ENCODE measurements at regions of chr12 and their contacts with region 1.

Region 1: GRCh38 chr12:31874961-31875608 is 84.1 kb upstream of the RESF1 start:
- DNase-seq: peak; percentile 88
- ATAC-seq: peak; percentile 83
- H3K4me3 ChIP-seq: peak overlapping the region in 4 of 5 experiments; percentile 3 to 42 (median 30)
- H3K4me3 Mint-ChIP-seq: peak overlapping the region; percentile 85
- H3K27ac ChIP-seq: peak overlapping the region; percentile 98 to 100
- H3K27ac Mint-ChIP-seq: peak overlapping the region; percentile 100
- H3K4me1 ChIP-seq: peaks cover 63 to 72% of the 10 kb centered on the region in 2 donors
- H3K4me1 Mint-ChIP-seq: peaks cover 75% of the 10 kb centered on the region
- H3K27me3 ChIP-seq: no peaks in the 10 kb centered on the region
- H3K27me3 Mint-ChIP-seq: no peaks in the 10 kb centered on the region
- CTCF ChIP-seq: no peak

Region 2: DNA sequence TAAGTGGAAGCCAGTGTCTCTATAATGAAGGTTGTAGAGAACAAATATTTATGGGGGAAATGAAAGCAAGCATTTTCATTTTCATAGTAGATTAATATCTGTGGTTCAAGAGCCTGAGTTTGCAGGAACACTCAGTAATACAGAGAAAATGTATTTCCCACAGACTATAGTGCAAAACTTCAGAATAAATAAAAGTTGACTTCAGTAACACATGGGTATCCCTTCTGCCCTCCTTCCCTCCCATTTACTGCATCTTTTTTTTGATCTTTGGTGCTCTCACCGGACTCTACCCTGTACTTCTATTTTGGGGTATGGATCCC is 70.9 kb before region 1 on chr12:
- CTCF ChIA-PET with region 1: interaction called, 3 read pairs
- POLR2A ChIA-PET with region 1: interaction called, 4 read pairs
- intact Hi-C with region 1: loop called (anchors 5 kb)
- DNase-seq: no peak
- ATAC-seq: no peak
- H3K4me3 ChIP-seq: peak overlapping the region in 1 of 5 experiments; percentile 21
- H3K4me3 Mint-ChIP-seq: peak overlapping the region; percentile 85
- H3K27ac ChIP-seq: peak overlapping the region in 1 of 2 donors; percentile 54
- H3K27ac Mint-ChIP-seq: peak overlapping the region; percentile 90
- H3K4me1 ChIP-seq: peaks cover 21 to 43% of the 10 kb centered on the region in 2 donors
- H3K4me1 Mint-ChIP-seq: peaks cover 51% of the 10 kb centered on the region
- H3K27me3 ChIP-seq: no peaks in the 10 kb centered on the region
- H3K27me3 Mint-ChIP-seq: no peaks in the 10 kb centered on the region
- CTCF ChIP-seq: no peak

Region 3: GRCh38 chr12:31832740-31833729 is 42.0 kb before region 1 on chr12:
- CTCF ChIA-PET with region 1: no interaction called
- POLR2A ChIA-PET with region 1: interaction called, 3 read pairs
- intact Hi-C with region 1: loop called (anchors 5 kb)
- DNase-seq: peak; percentile 84
- ATAC-seq: peak; percentile 80
- H3K4me3 ChIP-seq: peak overlapping the region in 1 of 5 experiments; percentile 47
- H3K4me3 Mint-ChIP-seq: peak overlapping the region; percentile 82
- H3K27ac ChIP-seq: peak overlapping the region; percentile 65 to 78
- H3K27ac Mint-ChIP-seq: peak overlapping the region; percentile 96
- H3K4me1 ChIP-seq: peaks cover 58 to 70% of the 10 kb centered on the region in 2 donors
- H3K4me1 Mint-ChIP-seq: peaks cover 70% of the 10 kb centered on the region
- H3K27me3 ChIP-seq: no peaks in the 10 kb centered on the region
- H3K27me3 Mint-ChIP-seq: no peaks in the 10 kb centered on the region
- CTCF ChIP-seq: no peak

Region 4: GRCh38 chr12:31959161-31959700 is 84.1 kb after region 1 on chr12 and contains the start of gene RESF1:
- CTCF ChIA-PET with region 1: interaction called, 12 read pairs
- POLR2A ChIA-PET with region 1: interaction called, 12 read pairs
- intact Hi-C with region 1: loop called (anchors 5 kb)
- DNase-seq: peak; percentile 91
- ATAC-seq: peak; percentile 85
- H3K4me3 ChIP-seq: peak within 1 kb of the TSS; percentile 65 to 98 (median 70)
- H3K4me3 Mint-ChIP-seq: peak within 1 kb of the TSS; percentile 96
- H3K27ac ChIP-seq: peak within 1 kb of the TSS; percentile 79 to 82
- H3K27ac Mint-ChIP-seq: peak within 1 kb of the TSS; percentile 96
- H3K4me1 ChIP-seq: peaks cover 49 to 50% of the 10 kb centered on the region in 2 donors
- H3K4me1 Mint-ChIP-seq: peaks cover 68% of the 10 kb centered on the region
- H3K27me3 ChIP-seq: no peaks in the 10 kb centered on the region
- H3K27me3 Mint-ChIP-seq: no peaks in the 10 kb centered on the region
- CTCF ChIP-seq: no peak
- total RNA-seq, gene RESF1: 350 and 352 TPM in 2 replicates